CD14-positive monocyte (primary cell): ENCODE measurements at regions of chr10 and their contacts with region 1.

Region 1: GRCh38 chr10:3852147-3852904 is 67.3 kb upstream of the KLF6 start:
- DNase-seq: peak; percentile 90 to 99 (median 97)
- H3K4me3 ChIP-seq: peak overlapping the region in 1 of 3 experiments; percentile 39
- H3K4me3 Mint-ChIP-seq: peak overlapping the region; percentile 2 to 65
- H3K27ac ChIP-seq: peak overlapping the region; percentile 99 to 100
- H3K27ac Mint-ChIP-seq: peak overlapping the region; percentile 96 to 99 (median 99)
- H3K4me1 ChIP-seq: peaks cover 47 to 50% of the 10 kb centered on the region in 2 donors
- H3K4me1 Mint-ChIP-seq: peaks cover 41% of the 10 kb centered on the region
- H3K27me3 ChIP-seq: no peaks in the 10 kb centered on the region
- H3K27me3 Mint-ChIP-seq: peaks cover 0 to 2% (median 0%) of the 10 kb centered on the region in 3 donors
- CTCF ChIP-seq: no peak

Region 2: GRCh38 chr10:3692387-3692999 is 159.8 kb before region 1 on chr10:
- intact Hi-C with region 1: no loop called
- DNase-seq: no peak
- H3K4me3 ChIP-seq: no peak overlapping the region
- H3K4me3 Mint-ChIP-seq: no peak overlapping the region
- H3K27ac ChIP-seq: no peak overlapping the region
- H3K27ac Mint-ChIP-seq: no peak overlapping the region
- H3K4me1 ChIP-seq: no peaks in the 10 kb centered on the region
- H3K4me1 Mint-ChIP-seq: no peaks in the 10 kb centered on the region
- H3K27me3 ChIP-seq: no peaks in the 10 kb centered on the region
- H3K27me3 Mint-ChIP-seq: peaks cover 2 to 4% (median 2%) of the 10 kb centered on the region in 3 donors
- CTCF ChIP-seq: no peak

Region 3: GRCh38 chr10:3805791-3806461 is 46.4 kb before region 1 on chr10:
- intact Hi-C with region 1: loop called in 1 of 2 experiments (anchors 1 kb)
- DNase-seq: peak; percentile 88 to 95 (median 94)
- H3K4me3 ChIP-seq: peak overlapping the region in 1 of 3 experiments; percentile 24
- H3K4me3 Mint-ChIP-seq: peak overlapping the region; percentile 21 to 54
- H3K27ac ChIP-seq: peak overlapping the region; percentile 85 to 100
- H3K27ac Mint-ChIP-seq: peak overlapping the region in 1 of 7 donors; percentile 98
- H3K4me1 ChIP-seq: peaks cover 55 to 60% of the 10 kb centered on the region in 2 donors
- H3K4me1 Mint-ChIP-seq: peaks cover 12% of the 10 kb centered on the region
- H3K27me3 ChIP-seq: no peaks in the 10 kb centered on the region
- H3K27me3 Mint-ChIP-seq: no peaks in the 10 kb centered on the region
- CTCF ChIP-seq: no peak

Region 4: DNA sequence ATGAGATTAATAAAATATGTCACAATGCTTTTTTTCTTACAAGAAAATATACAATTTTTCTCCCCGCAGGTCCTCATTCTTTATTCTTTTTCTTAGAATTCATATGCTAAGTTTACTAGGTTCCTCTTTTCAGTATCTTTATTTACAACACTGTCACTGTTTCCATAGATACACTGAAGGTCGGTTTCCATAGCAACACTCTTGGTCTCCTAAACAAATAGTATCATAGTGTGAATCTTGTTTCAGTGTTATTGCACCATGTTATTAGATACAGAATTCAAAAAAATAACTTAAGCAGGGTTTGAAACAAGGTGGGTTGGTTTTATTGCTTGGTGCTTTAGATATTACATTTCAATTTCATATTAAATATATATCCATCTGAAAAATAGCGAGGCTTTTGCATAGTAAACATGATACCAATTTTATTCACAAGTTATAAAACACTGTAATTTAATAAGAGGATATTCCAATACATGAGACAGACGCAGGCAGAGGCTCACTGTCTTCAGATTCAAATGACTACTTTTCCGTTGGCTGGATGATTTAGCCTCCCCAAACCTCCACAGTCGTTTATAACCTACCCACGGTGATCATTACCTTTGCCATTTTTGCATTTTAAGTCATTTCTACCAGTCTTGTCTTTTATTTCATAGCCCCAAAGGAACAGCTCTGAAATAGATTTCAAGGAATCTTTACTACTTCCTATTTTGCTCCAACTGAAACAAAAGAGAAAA is 21.6 kb after region 1 on chr10:
- intact Hi-C with region 1: loop called in 1 of 2 experiments (anchors 2 kb)
- DNase-seq: peak; percentile 92 to 99 (median 95)
- H3K4me3 ChIP-seq: no peak overlapping the region
- H3K4me3 Mint-ChIP-seq: peak overlapping the region in 1 of 2 donors; percentile 67
- H3K27ac ChIP-seq: peak overlapping the region; percentile 58 to 91
- H3K27ac Mint-ChIP-seq: peak overlapping the region; percentile 93 to 99 (median 97)
- H3K4me1 ChIP-seq: peaks cover 52 to 62% of the 10 kb centered on the region in 2 donors
- H3K4me1 Mint-ChIP-seq: peaks cover 49% of the 10 kb centered on the region
- H3K27me3 ChIP-seq: no peaks in the 10 kb centered on the region
- H3K27me3 Mint-ChIP-seq: peaks cover 0 to 1% (median 0%) of the 10 kb centered on the region in 3 donors
- CTCF ChIP-seq: no peak

Region 5: DNA sequence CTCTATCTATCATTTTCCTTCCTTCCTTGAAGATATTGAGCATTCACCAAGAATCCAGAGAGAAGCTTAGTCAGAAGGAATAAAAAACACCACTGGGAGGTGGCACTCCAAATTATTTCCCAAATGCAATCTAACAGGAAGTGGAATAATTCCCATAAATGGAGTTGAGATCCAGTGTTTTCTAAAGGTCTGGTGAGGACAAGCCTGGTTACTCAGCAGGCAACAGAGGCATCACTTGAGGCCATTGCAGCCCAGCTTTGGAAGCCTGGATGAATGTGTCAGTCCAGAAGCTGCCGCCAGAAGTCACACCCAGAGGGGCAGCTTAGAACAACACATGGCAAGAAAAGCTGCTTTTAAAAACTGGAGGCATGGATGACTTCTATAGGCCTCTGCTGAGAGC is 221.6 kb after region 1 on chr10:
- intact Hi-C with region 1: no loop called
- DNase-seq: no peak
- H3K4me3 ChIP-seq: no peak overlapping the region
- H3K4me3 Mint-ChIP-seq: no peak overlapping the region
- H3K27ac ChIP-seq: no peak overlapping the region
- H3K27ac Mint-ChIP-seq: no peak overlapping the region
- H3K4me1 ChIP-seq: peaks cover 0 to 4% of the 10 kb centered on the region in 2 donors
- H3K4me1 Mint-ChIP-seq: peaks cover 2% of the 10 kb centered on the region
- H3K27me3 ChIP-seq: no peaks in the 10 kb centered on the region
- H3K27me3 Mint-ChIP-seq: peaks cover 2 to 4% (median 3%) of the 10 kb centered on the region in 3 donors
- CTCF ChIP-seq: no peak